ENCODE measurements at regions of chr4 and their contacts with region 1.

Region 1: DNA sequence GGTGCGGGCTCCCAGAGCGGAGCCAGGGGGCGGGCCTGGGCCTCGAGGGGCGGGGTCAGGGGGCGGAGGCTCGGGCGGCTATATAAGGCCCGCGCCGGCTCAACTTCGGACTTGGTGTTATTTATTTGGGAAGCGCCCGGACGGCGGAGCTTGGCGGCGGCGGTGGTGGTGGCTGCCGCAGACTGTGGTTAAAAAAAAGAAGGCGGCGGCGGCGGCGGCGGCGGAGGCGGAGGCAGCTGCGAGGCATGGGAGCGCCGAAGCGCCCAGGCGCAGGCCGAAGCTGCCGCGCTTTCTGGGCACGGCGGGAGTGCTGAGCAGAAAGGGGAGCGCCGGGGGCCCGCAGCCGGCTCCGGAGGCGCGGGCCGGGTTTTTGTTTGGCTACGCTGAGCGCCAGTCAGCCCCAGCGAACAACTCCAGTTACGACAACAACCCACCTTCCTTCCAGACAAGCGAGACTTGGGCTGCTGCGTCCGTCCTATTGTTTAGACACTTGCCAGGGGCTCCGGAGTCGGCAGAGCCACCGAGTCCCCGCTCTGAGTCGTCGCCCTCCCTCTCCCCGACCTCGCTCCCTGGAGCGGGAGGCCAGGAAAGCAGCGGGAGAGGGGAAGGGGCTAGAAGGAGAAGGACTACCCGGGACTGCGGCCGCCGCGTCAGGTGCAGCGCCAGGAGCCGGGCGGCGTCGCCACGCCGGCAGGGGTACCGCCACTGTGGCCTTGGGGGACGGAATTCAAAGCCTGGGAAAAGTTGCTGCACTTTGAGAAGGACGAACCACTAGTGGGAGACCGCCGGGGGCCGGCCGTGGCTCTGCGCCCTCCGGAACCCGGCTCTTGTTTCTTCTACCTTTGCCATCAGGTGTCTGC is at the start of gene SLIT2:
- DNase-seq: peak; percentile 87
- H3K4me3 ChIP-seq: peak within 1 kb of the TSS; percentile 69 to 80 (median 79)
- H3K27ac ChIP-seq: peak within 1 kb of the TSS; percentile 3
- H3K4me1 ChIP-seq: peaks cover 36% of the 10 kb centered on the region
- H3K27me3 ChIP-seq: no peaks in the 10 kb centered on the region
- CTCF ChIP-seq: no peak
- POLR2A ChIP-seq: peak; percentile 95
- total RNA-seq, gene SLIT2: 22.2 and 28.2 TPM in 2 replicates

Region 2: DNA sequence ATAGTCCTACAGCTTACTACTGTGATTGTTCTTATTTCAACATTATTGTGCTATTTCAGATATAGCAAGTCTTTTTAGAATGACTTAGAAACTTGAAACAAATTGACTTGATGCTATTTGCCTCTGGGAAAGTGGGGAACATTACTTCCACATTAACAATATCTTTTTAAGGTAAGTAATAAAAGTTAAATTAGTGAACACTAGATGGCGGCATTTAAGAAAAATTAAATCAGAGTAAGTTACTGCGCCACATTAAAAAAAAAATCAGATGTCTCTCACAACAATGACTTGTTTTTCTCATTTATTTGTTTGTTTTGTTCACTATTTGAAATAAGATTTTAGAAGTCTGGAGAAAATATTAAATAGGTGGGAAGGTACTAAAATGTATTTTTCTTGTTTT is 1027.2 kb before region 1 on chr4:
- CTCF ChIA-PET with region 1: interaction called, 29 read pairs
- POLR2A ChIA-PET with region 1: no interaction called
- dilution Hi-C with region 1: no loop called
- intact Hi-C with region 1: loop called (anchors 1 kb)
- DNase-seq: peak; percentile 49
- H3K4me3 ChIP-seq: no peak overlapping the region
- H3K27ac ChIP-seq: no peak overlapping the region
- H3K4me1 ChIP-seq: no peaks in the 10 kb centered on the region
- H3K27me3 ChIP-seq: no peaks in the 10 kb centered on the region
- CTCF ChIP-seq: no peak
- POLR2A ChIP-seq: no peak

Region 3: DNA sequence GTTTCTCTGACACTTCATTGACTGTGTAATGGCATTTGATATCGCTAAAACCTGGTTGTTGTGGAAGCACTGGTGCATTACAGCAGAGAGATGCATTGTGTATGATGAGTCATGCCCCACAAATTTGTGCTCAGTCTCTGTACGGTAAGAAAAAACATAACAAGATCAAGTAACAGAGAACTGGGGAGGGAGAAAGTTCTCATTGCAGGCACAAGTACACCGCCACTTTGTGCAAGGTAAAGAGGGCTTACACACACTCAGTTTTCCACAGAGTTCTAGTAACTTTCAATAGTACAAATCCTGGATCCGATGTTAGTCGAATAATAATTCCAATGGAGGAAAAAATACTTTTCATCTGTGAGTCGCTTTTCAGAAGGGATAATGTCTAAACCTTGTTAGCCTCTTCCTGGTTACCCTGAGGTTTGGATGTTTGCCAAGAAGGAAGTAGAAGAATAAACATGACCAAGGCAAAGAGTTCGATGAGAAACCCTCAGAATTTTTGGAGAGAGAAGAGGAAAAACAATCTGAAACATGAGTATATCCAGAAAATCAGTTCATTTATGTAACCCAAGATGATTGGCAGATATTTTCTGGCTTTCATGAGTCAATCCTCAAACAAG is 512.8 kb before region 1 on chr4:
- CTCF ChIA-PET with region 1: interaction called, 5 read pairs
- POLR2A ChIA-PET with region 1: no interaction called
- dilution Hi-C with region 1: no loop called
- intact Hi-C with region 1: loop called (anchors 2 kb)
- DNase-seq: peak; percentile 96
- H3K4me3 ChIP-seq: peak overlapping the region in 2 of 3 experiments; percentile 9 to 41
- H3K27ac ChIP-seq: peak overlapping the region; percentile 84
- H3K4me1 ChIP-seq: peaks cover 22% of the 10 kb centered on the region
- H3K27me3 ChIP-seq: no peaks in the 10 kb centered on the region
- CTCF ChIP-seq: no peak
- POLR2A ChIP-seq: no peak

Region 4: GRCh38 chr4:19971829-19972228 is 280.2 kb before region 1 on chr4:
- CTCF ChIA-PET with region 1: interaction called, 14 read pairs
- POLR2A ChIA-PET with region 1: no interaction called
- dilution Hi-C with region 1: no loop called
- intact Hi-C with region 1: no loop called
- DNase-seq: peak; percentile 19
- H3K4me3 ChIP-seq: no peak overlapping the region
- H3K27ac ChIP-seq: no peak overlapping the region
- H3K4me1 ChIP-seq: no peaks in the 10 kb centered on the region
- H3K27me3 ChIP-seq: no peaks in the 10 kb centered on the region
- CTCF ChIP-seq: no peak
- POLR2A ChIP-seq: no peak

Region 5: DNA sequence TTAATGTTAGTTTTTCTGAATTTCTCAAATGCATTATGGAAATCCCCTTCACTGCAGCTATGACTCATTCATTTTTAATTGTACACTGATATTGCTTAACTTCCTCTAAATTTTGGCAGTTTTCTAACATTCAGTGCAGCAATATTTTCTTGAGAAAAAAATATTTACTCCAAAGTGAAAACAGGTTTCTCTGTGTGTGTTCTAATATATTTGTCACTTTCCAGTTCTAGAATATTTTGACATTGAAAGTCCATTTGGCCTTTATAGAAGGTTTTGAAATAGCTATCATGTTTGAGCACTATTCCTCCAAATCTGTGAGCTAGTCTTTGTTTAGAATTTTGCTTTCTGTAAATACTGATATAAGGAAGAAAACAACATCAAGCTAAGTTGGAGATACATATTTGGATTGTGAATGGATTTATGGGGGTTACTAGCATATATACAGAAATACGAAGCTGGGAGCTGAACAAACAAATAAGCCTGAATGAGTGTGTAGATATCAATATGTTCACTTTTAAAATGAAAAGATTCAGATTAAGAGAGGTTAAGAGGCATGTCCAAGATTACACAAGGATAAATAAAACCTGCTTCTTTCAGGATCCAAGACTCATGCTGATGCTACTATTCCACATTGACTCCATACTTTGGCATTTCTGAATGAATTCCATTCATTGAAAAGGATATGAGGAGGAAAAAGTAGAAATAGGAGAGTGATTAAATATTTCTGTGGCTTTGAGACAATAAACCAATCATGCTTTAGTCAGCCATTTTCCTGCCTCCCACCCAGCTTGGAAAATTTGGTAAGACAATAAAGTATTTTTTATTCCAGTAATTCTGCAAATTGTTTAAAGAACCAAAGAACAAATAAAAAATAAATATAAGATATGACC is 57.7 kb before region 1 on chr4:
- CTCF ChIA-PET with region 1: interaction called, 13 read pairs
- POLR2A ChIA-PET with region 1: no interaction called
- dilution Hi-C with region 1: no loop called
- intact Hi-C with region 1: no loop called
- DNase-seq: peak; percentile 78
- H3K4me3 ChIP-seq: no peak overlapping the region
- H3K27ac ChIP-seq: peak overlapping the region; percentile 58
- H3K4me1 ChIP-seq: peaks cover 20% of the 10 kb centered on the region
- H3K27me3 ChIP-seq: no peaks in the 10 kb centered on the region
- CTCF ChIP-seq: no peak
- POLR2A ChIP-seq: no peak

Region 6: GRCh38 chr4:20464381-20464780 is 212.4 kb after region 1 on chr4:
- CTCF ChIA-PET with region 1: no interaction called
- POLR2A ChIA-PET with region 1: no interaction called
- dilution Hi-C with region 1: no loop called
- intact Hi-C with region 1: no loop called
- DNase-seq: peak; percentile 23
- H3K4me3 ChIP-seq: no peak overlapping the region
- H3K27ac ChIP-seq: no peak overlapping the region
- H3K4me1 ChIP-seq: no peaks in the 10 kb centered on the region
- H3K27me3 ChIP-seq: no peaks in the 10 kb centered on the region
- CTCF ChIP-seq: no peak
- POLR2A ChIP-seq: no peak

Region 7: GRCh38 chr4:20544645-20545044 is 292.6 kb after region 1 on chr4:
- CTCF ChIA-PET with region 1: interaction called, 3 read pairs
- POLR2A ChIA-PET with region 1: no interaction called
- dilution Hi-C with region 1: no loop called
- intact Hi-C with region 1: loop called (anchors 1 kb)
- DNase-seq: peak; percentile 74
- H3K4me3 ChIP-seq: no peak overlapping the region
- H3K27ac ChIP-seq: no peak overlapping the region
- H3K4me1 ChIP-seq: no peaks in the 10 kb centered on the region
- H3K27me3 ChIP-seq: no peaks in the 10 kb centered on the region
- CTCF ChIP-seq: peak; percentile 23 to 38
- POLR2A ChIP-seq: no peak